Dorsolateral prefrontal cortex (tissue), 120 donors: ENCODE measurements at regions of chr6 and their contacts with region 1.

Region 1: DNA sequence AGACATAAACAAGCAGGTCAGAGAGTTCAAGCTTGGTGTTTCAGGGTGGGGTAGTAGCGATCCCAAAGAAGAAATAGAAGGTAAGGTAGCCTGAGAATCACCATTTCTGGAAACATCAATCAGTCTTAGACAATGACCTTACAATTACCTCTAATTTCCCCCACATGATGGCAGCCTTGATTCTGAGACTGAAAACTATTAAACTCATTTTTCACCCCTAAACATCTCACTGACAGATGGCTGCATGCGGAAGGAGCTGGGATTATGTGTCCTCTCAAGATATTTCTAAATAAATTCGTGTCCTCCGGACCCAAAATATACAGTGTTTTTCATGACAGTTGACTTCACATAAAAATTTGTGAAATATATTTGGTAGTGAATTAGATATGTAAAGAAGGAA is 61.0 kb downstream of the KIF6 start:
- DNase-seq: no peak
- H3K4me3 ChIP-seq: no peak overlapping the region
- H3K27ac ChIP-seq: peak overlapping the region in 55 of 59 donors; percentile 21 to 94 (median 82)
- H3K27me3 ChIP-seq: no peaks in the 10 kb centered on the region
- CTCF ChIP-seq: peak in 53 of 56 donors; percentile 29 to 76 (median 54)

Region 2: DNA sequence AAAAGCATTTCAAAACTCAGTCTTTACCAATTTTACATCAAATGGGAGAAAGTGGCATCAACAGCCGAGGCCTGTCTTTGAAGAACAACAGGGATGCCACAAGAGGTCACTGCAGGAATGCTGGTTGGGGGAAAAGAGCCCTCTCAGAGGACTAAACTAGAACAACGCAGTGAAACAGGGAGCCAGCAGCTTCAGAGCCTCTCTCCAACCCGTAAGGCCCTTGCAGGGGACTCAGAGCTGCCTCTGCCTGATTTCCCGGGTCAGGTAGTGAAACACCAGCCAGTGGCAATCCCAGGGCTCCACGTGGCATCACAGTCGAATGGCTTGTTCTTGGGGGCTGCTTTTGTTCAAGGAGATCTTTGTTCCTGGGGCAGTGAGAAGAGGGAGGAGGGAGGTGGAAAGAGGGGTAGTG is 286.6 kb before region 1 on chr6:
- intact Hi-C with region 1: loop called in 1 of 2 experiments (anchors 5 kb)
- DNase-seq: peak; percentile 48 to 89 (median 78)
- H3K4me3 ChIP-seq: peak overlapping the region in 1 of 59 donors; percentile 19
- H3K27ac ChIP-seq: peak overlapping the region in 47 of 59 donors; percentile 4 to 88 (median 65)
- H3K27me3 ChIP-seq: no peaks in the 10 kb centered on the region
- CTCF ChIP-seq: peak; percentile 9 to 93 (median 81)

Region 3: DNA sequence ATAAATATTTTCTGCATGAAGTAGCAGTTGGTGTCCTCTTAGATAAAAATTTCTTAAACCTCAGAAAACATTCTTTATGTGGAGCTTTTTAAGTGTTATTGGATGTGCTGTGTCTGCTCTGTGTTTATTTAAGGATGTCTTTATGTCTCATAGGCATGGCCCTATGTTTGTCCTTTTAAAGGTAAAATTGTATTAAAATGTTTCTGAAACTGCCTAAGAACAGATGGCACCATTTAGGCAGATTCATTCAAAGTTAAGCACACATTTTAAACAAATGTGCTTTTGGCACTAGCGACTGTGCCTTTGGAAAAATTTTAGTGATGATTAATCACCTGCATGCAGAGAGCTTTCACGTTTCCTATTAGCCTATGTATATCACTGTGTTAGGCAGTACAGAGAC is 64.2 kb before region 1 on chr6:
- intact Hi-C with region 1: no loop called
- DNase-seq: no peak
- H3K4me3 ChIP-seq: no peak overlapping the region
- H3K27ac ChIP-seq: peak overlapping the region in 1 of 59 donors; percentile 10
- H3K27me3 ChIP-seq: no peaks in the 10 kb centered on the region
- CTCF ChIP-seq: no peak

Region 4: GRCh38 chr6:39714802-39715201 is 50.6 kb after region 1 on chr6:
- intact Hi-C with region 1: loop called (anchors 10 kb)
- DNase-seq: no peak
- H3K4me3 ChIP-seq: peak overlapping the region in 45 of 59 donors; percentile 3 to 57 (median 35)
- H3K27ac ChIP-seq: peak overlapping the region; percentile 42 to 99 (median 95)
- H3K27me3 ChIP-seq: no peaks in the 10 kb centered on the region
- CTCF ChIP-seq: peak in 1 of 56 donors; percentile 7

Region 5: DNA sequence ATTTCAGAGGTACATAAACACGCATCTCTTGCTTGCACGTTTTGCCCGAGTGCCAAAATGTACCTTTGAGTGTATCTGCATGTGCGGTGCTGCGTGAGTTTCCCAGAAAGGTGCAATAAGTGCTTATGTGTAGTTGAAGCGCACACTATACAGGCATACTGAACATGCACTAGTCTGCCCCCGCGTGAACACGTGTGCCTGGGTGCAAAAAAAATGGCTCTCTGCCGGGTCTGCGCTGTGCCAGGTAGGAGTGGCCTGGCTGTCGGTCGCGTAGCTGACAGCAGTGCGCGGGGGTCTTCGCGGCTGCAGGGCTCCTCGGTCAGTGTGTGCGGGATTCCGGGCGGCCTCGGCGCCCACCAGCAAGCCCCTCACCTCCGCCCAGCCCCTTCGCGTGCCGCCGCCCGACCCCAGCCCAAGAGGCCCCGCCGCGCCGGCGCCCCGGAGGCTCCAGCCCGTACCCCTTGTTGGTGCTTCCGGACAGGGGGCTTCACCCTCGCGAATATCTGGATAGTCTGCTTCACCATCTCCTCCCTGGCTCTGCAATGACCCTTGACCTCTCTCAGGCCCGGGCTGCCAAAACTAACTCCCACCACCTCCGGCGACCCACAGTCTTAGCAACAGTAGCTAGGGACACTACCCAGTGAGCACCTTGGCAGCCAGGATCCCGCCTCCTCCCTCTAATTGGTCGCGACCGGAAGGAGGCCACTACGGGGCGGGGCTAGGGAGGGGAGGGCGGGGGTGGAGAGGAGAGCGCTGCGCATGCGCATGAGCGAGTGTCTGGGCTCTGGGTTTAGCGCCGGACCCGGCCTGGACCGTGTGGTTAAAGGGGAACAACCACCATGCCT is 60.8 kb after region 1 on chr6 and contains the start of gene KIF6:
- intact Hi-C with region 1: loop called in 1 of 2 experiments (anchors 10 kb)
- DNase-seq: peak; percentile 87 to 96 (median 94)
- H3K4me3 ChIP-seq: peak within 1 kb of the TSS; percentile 54 to 98 (median 85)
- H3K27ac ChIP-seq: peak within 1 kb of the TSS; percentile 49 to 99 (median 94)
- H3K27me3 ChIP-seq: no peaks in the 10 kb centered on the region
- CTCF ChIP-seq: peak in 31 of 56 donors; percentile 5 to 71 (median 36)
- total RNA-seq, gene KIF6: 3.2 to 34.6 (median 11.4) TPM

Region 6: GRCh38 chr6:39791850-39792539 is 127.8 kb after region 1 on chr6 and contains the start of gene DAAM2:
- intact Hi-C with region 1: loop called (anchors 5 to 10 kb)
- DNase-seq: peak in 4 of 10 donors; percentile 45 to 78 (median 66)
- H3K4me3 ChIP-seq: peak within 1 kb of the TSS; percentile 48 to 84 (median 73)
- H3K27ac ChIP-seq: peak within 1 kb of the TSS; percentile 52 to 98 (median 94)
- H3K27me3 ChIP-seq: peaks cover 0 to 6% (median 0%) of the 10 kb centered on the region in 45 donors
- CTCF ChIP-seq: peak in 42 of 56 donors; percentile 2 to 53 (median 30)
- total RNA-seq, gene DAAM2: 43.8 to 450 (median 152) TPM

Region 7: GRCh38 chr6:39892490-39893129 is 228.4 kb after region 1 on chr6:
- intact Hi-C with region 1: loop called in 1 of 2 experiments (anchors 5 kb)
- DNase-seq: peak; percentile 35 to 82 (median 76)
- H3K4me3 ChIP-seq: no peak overlapping the region
- H3K27ac ChIP-seq: peak overlapping the region in 53 of 59 donors; percentile 2 to 96 (median 65)
- H3K27me3 ChIP-seq: no peaks in the 10 kb centered on the region
- CTCF ChIP-seq: peak in 55 of 56 donors; percentile 47 to 89 (median 76)